ENCODE measurements at regions of chr15 and their contacts with region 1.

Region 1: DNA sequence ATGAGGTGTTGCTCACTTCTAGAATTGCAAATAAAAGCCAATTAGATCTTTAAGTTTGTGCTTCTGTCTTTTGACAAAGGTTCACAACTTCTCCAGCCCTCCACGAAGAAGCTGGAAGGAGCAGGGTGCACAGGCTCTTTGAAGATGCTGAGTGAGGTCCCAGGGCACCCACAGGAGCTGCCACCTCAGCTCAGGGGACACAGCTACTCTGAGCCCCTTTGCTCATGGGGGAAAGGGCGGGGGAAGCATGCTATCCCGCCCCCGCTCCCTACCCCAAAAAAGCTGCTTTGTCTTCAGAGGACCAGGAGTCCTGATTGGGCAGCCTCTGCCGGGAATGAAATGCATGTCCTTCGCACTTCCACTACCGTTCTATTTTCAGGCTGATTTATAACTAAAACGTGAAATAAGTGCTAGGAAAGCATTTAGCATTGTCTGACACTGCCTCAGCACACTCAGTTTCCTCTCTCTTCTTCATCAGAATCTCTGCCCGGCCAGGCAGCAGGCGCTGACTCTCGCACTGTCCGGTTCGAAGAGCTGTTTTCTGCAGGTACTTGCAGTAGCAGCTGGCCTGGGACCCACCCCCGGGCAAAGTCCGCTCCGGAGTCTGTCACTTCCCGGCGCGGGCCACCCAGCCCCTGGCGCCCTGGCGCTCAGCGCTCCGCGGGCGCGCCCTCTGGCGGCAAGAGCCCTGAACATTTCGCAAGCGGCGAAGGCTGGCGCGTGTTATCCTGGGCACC is 45.5 kb upstream of the KLHL25 start:
- DNase-seq: no peak
- H3K4me3 ChIP-seq: peak overlapping the region; percentile 54
- CTCF ChIP-seq: peak; percentile 90

Region 2: DNA sequence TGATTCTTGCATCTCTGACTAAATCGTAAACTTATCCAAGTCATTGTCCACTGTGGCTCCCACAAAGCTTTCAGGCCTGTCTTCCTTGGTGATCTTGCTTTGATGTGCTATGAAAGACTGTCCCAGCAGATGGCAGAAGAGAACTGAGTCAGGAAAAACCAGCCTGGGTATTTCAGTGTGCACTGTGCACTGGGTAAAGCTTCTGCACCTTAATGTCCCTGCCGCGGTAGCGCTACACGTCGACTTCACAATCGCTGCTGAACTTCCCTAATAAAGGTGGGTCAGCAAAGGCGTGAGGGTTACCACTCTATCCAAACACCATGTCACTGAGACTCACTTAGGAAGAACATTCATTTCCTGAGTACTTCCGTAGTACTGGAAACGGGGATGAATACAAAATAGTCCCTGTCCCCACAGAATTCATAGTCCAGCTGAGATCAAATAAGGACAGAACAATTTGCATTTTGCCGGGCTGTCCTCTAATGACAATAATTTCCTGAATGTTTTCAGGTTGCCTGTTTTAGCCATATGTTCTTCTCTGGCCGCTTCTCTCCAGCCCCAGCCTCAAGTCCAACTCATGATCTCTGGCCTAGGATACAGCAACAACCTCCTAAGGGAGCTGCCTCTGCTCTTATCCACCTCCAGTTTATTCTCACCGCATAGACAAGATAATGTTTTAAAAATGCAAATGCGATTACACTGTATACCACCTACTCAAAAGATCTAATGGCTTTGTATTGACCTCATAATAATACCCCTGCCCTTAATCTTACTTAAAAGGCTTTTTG is 543.4 kb before region 1 on chr15:
- CTCF ChIA-PET with region 1: interaction called, 12 read pairs
- POLR2A ChIA-PET with region 1: no interaction called
- DNase-seq: no peak
- H3K4me3 ChIP-seq: peak overlapping the region; percentile 46
- CTCF ChIP-seq: peak; percentile 73

Region 3: GRCh38 chr15:85730001-85730820 is 110.0 kb before region 1 on chr15:
- CTCF ChIA-PET with region 1: interaction called, 99 read pairs
- POLR2A ChIA-PET with region 1: no interaction called
- DNase-seq: no peak
- H3K4me3 ChIP-seq: no peak overlapping the region
- CTCF ChIP-seq: peak; percentile 54

Region 4: GRCh38 chr15:85742186-85742821 is 97.9 kb before region 1 on chr15:
- CTCF ChIA-PET with region 1: interaction called, 43 read pairs
- POLR2A ChIA-PET with region 1: no interaction called
- DNase-seq: peak; percentile 34
- H3K4me3 ChIP-seq: no peak overlapping the region
- CTCF ChIP-seq: no peak

Region 5: GRCh38 chr15:85800467-85801123 is 39.6 kb before region 1 on chr15:
- CTCF ChIA-PET with region 1: interaction called, 12 read pairs
- POLR2A ChIA-PET with region 1: no interaction called
- DNase-seq: no peak
- H3K4me3 ChIP-seq: no peak overlapping the region
- CTCF ChIP-seq: no peak

Region 6: DNA sequence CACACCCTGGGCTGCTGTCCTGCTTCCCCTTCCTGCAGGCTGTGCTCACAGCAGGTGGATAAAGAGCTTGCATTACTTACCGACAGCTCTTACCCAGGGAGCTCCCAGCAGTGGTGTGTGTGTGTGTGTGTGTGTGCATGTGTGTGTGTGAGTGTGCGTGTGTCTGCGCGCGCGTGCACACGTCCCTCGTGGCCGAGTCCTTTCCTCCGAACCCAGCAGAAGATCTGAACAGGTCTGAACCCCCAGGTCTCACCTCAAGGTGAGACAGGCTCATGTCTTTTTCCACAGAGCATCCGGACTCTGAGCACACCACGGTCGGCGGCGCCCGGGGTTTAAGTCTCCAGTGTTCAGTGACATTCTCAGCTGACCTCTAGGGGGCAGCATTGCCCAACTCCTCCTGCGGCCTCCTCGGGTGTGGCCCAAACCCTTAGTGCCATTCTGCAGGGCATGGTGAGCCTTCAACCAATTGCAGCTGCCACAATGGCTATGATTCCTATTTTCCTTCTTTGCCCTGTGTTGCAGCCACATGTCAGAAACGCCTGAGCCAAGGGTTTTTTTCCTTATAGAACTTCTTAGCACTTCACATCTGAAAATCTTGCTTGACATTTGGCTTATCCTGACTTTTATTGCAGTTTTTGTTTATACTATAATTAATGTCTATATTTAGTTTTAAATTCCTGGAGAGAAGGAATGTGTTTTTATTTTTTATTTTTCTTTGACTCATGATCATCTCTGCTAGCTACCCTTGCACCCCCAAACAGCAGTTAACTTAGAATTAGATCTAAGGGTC is 18.5 kb after region 1 on chr15:
- CTCF ChIA-PET with region 1: interaction called, 60 read pairs
- POLR2A ChIA-PET with region 1: no interaction called
- DNase-seq: no peak
- H3K4me3 ChIP-seq: peak overlapping the region; percentile 23
- CTCF ChIP-seq: peak; percentile 83

Region 7: DNA sequence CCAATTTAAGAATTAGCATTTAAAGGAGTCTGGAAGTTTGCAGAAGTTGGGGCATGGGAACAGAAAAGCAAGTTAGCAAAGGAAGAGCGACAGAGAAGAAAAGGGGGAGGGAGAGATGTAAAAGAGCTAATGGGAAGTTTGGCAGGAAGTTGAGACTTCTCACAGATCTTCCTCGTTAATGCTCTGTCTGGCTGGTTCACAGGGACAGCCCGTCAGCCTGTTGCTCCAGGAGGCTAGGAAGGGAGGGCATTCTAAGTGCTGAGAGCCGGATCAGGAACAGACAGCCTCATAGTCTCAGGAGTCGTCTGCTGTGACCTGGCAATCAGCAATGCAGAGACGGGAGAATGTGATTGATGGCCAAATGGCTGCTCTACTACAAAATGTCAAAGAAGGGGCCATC is 389.7 kb after region 1 on chr15:
- CTCF ChIA-PET with region 1: no interaction called
- POLR2A ChIA-PET with region 1: no interaction called
- DNase-seq: no peak
- H3K4me3 ChIP-seq: no peak overlapping the region
- CTCF ChIP-seq: no peak